ENCODE measurements at regions of chr11 and their contacts with region 1.

Region 1: GRCh38 chr11:12207384-12208150 is 97.2 kb downstream of the MICAL2 start:
- DNase-seq: no peak
- H3K4me3 Mint-ChIP-seq: peak overlapping the region; percentile 59
- H3K27ac Mint-ChIP-seq: peak overlapping the region; percentile 89
- H3K4me1 Mint-ChIP-seq: peaks cover 74% of the 10 kb centered on the region
- H3K27me3 Mint-ChIP-seq: no peaks in the 10 kb centered on the region

Region 2: GRCh38 chr11:12110201-12110713 is 97.3 kb before region 1 on chr11 and contains the start of gene MICAL2:
- intact Hi-C with region 1: loop called (anchors 1 kb)
- DNase-seq: peak; percentile 88
- H3K4me3 Mint-ChIP-seq: peak within 1 kb of the TSS; percentile 90
- H3K27ac Mint-ChIP-seq: peak within 1 kb of the TSS; percentile 99
- H3K4me1 Mint-ChIP-seq: peaks cover 60% of the 10 kb centered on the region
- H3K27me3 Mint-ChIP-seq: no peaks in the 10 kb centered on the region
- total RNA-seq, gene MICAL2: 736 TPM in 2 replicates

Region 3: GRCh38 chr11:12159351-12160099 is 48.0 kb before region 1 on chr11:
- intact Hi-C with region 1: loop called (anchors 1 kb)
- DNase-seq: no peak
- H3K4me3 Mint-ChIP-seq: peak overlapping the region; percentile 18
- H3K27ac Mint-ChIP-seq: peak overlapping the region; percentile 82
- H3K4me1 Mint-ChIP-seq: peaks cover 88% of the 10 kb centered on the region
- H3K27me3 Mint-ChIP-seq: no peaks in the 10 kb centered on the region

Region 4: GRCh38 chr11:12185914-12186313 is 21.7 kb before region 1 on chr11:
- intact Hi-C with region 1: loop called (anchors 1 kb)
- DNase-seq: no peak
- H3K4me3 Mint-ChIP-seq: no peak overlapping the region
- H3K27ac Mint-ChIP-seq: peak overlapping the region; percentile 44
- H3K4me1 Mint-ChIP-seq: peaks cover 71% of the 10 kb centered on the region
- H3K27me3 Mint-ChIP-seq: no peaks in the 10 kb centered on the region

Region 5: GRCh38 chr11:12224537-12224893 is 16.9 kb after region 1 on chr11:
- intact Hi-C with region 1: loop called (anchors 2 kb)
- DNase-seq: peak; percentile 83
- H3K4me3 Mint-ChIP-seq: peak overlapping the region; percentile 51
- H3K27ac Mint-ChIP-seq: peak overlapping the region; percentile 91
- H3K4me1 Mint-ChIP-seq: peaks cover 54% of the 10 kb centered on the region
- H3K27me3 Mint-ChIP-seq: no peaks in the 10 kb centered on the region